IMR-90 (cell line): ENCODE measurements at regions of chr14 and their contacts with region 1.

Region 1: GRCh38 chr14:92800012-92800411 is 5.9 kb downstream of the GOLGA5 start:
- DNase-seq: no peak
- ATAC-seq: no peak
- H3K4me3 ChIP-seq: no peak overlapping the region
- H3K27ac ChIP-seq: no peak overlapping the region
- H3K4me1 ChIP-seq: 0 out of 2 replicates have a peak, but pooled peaks cover 2% of the 10 kb centered on the region
- H3K27me3 ChIP-seq: no peaks in the 10 kb centered on the region
- CTCF ChIP-seq: no peak
- POLR2A ChIP-seq: no peak
- RAD21 ChIP-seq: no peak

Region 2: DNA sequence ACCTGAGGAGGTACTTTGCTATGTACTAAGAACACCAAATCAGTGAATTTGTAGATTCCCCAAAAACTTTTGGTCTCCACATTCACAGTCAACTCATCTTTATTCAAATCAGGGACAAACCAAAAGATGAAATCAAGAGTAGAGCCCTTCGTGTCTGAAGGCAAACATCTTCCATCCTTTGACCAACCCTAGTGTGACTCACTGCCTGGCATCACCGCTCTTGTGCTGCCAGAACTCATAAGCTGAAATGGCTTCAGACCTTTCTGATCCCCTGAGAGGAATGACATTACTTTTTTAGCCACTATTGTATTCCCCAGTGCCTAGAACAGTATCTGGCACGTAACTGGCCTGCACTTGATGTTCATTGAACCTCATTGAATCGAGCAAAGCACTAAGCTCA is 44.2 kb after region 1 on chr14:
- CTCF ChIA-PET with region 1: no interaction called
- POLR2A ChIA-PET with region 1: no interaction called
- dilution Hi-C with region 1: no loop called
- in situ Hi-C with region 1: no loop called
- intact Hi-C with region 1: loop called (anchors 5 kb)
- DNase-seq: no peak
- ATAC-seq: peak; percentile 12; the same call in 1 of the 2 replicates
- H3K4me3 ChIP-seq: no peak overlapping the region
- H3K27ac ChIP-seq: no peak overlapping the region
- H3K4me1 ChIP-seq: peaks cover 2% of the 10 kb centered on the region; the same call in 1 of the 2 replicates
- H3K27me3 ChIP-seq: no peaks in the 10 kb centered on the region
- CTCF ChIP-seq: no peak
- POLR2A ChIP-seq: no peak
- RAD21 ChIP-seq: no peak

Region 3: DNA sequence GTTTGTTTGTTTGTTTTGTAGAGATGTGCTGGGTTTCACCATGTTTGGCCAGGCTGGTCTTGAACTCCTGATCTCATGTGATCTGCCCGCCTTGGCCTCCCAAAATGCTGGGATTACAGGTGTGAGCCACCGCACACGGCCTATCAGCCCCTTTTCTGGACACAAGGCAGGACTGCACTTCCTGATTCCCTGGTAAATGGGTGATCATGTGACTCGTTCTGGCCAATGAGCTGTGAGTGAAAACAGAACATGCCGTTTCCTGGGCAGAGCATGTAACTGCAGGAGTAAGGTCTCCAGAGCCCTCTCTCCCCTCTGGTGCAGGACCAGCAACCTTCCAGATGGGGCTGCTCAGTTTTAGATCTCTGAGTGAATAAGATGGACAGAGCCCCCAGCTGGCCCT is 223.0 kb after region 1 on chr14:
- CTCF ChIA-PET with region 1: no interaction called
- POLR2A ChIA-PET with region 1: no interaction called
- dilution Hi-C with region 1: no loop called
- in situ Hi-C with region 1: no loop called
- intact Hi-C with region 1: no loop called
- DNase-seq: no peak
- ATAC-seq: peak; percentile 42; the same call in 1 of the 2 replicates
- H3K4me3 ChIP-seq: no peak overlapping the region
- H3K27ac ChIP-seq: no peak overlapping the region
- H3K4me1 ChIP-seq: no peaks in the 10 kb centered on the region
- H3K27me3 ChIP-seq: peaks cover 1% of the 10 kb centered on the region; the same call in 1 of the 2 replicates
- CTCF ChIP-seq: no peak
- POLR2A ChIP-seq: no peak
- RAD21 ChIP-seq: no peak

Region 4: DNA sequence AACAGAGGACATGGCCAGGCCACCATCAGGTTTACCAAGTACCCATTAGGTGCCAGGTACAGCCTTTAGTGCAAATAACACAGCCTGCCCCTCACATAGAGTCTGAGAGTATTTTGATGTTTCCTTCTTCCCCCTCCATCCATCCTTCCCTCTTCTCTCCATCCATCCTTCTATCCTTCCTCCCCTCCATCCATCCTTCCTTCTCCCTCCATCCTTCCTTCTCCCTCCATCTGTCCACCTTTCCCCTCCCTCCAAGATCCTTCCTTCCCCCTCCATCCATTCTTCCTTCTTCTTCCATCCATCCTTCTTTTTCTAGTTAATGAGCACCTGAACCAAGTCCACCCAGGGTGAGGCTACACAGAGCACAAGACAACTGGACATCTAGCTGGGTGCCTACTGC is 275.9 kb after region 1 on chr14:
- CTCF ChIA-PET with region 1: no interaction called
- POLR2A ChIA-PET with region 1: interaction called, 21 read pairs
- dilution Hi-C with region 1: no loop called
- in situ Hi-C with region 1: no loop called
- intact Hi-C with region 1: no loop called
- DNase-seq: no peak
- ATAC-seq: no peak
- H3K4me3 ChIP-seq: no peak overlapping the region
- H3K27ac ChIP-seq: no peak overlapping the region
- H3K4me1 ChIP-seq: peaks cover 13% of the 10 kb centered on the region
- H3K27me3 ChIP-seq: no peaks in the 10 kb centered on the region
- CTCF ChIP-seq: no peak
- POLR2A ChIP-seq: no peak
- RAD21 ChIP-seq: no peak

Region 5: GRCh38 chr14:93375673-93376156 is 575.7 kb after region 1 on chr14:
- CTCF ChIA-PET with region 1: no interaction called
- POLR2A ChIA-PET with region 1: no interaction called
- dilution Hi-C with region 1: no loop called
- in situ Hi-C with region 1: no loop called
- intact Hi-C with region 1: no loop called
- DNase-seq: no peak
- ATAC-seq: no peak
- H3K4me3 ChIP-seq: no peak overlapping the region
- H3K27ac ChIP-seq: no peak overlapping the region
- H3K4me1 ChIP-seq: no peaks in the 10 kb centered on the region
- H3K27me3 ChIP-seq: no peaks in the 10 kb centered on the region
- CTCF ChIP-seq: no peak
- POLR2A ChIP-seq: no peak
- RAD21 ChIP-seq: no peak